ENCODE measurements at regions of chrX and their contacts with region 1.

Region 1: GRCh38 chrX:50762578-50762977 is 51.4 kb downstream of the SHROOM4 start:
- DNase-seq: no peak
- H3K4me3 ChIP-seq: no peak overlapping the region
- CTCF ChIP-seq: no peak
- POLR2A ChIP-seq: no peak

Region 2: DNA sequence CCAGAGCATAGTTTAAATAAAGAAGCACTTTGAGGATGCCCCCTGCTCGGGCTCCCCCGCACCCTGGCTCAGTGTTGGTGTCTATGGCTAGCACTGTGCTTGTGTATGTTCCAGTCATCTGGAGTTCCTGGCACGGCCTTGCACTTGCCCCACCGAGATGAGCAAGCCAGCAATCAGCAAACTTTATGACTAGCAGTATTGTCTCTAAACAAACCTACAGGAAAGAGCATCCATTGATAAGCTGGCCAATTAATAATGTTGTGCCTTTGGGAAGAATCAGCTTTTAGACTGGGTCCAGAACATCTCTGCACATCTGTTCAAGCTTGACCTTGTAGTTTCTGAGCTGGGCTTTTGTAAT is 52.1 kb after region 1 on chrX:
- intact Hi-C with region 1: loop called (anchors 5 kb)
- DNase-seq: no peak
- H3K4me3 ChIP-seq: no peak overlapping the region
- CTCF ChIP-seq: no peak
- POLR2A ChIP-seq: no peak

Measured in lower leg skin (tissue), 4 donors.